HCT116 (cell line): ENCODE measurements at regions of chr3 and their contacts with region 1.

Region 1: GRCh38 chr3:111967651-111968274 is 11.1 kb upstream of the ABHD10 start:
- DNase-seq: peak; percentile 82
- ATAC-seq: peak; percentile 92
- H3K4me3 ChIP-seq: no peak overlapping the region
- H3K27ac ChIP-seq: peak overlapping the region; percentile 85
- H3K4me1 ChIP-seq: peaks cover 31 to 52% of the 10 kb centered on the region in 2 experiments
- H3K27me3 ChIP-seq: no peaks in the 10 kb centered on the region
- CTCF ChIP-seq: peak; percentile 94 to 98 (median 96)
- POLR2A ChIP-seq: no peak
- RAD21 ChIP-seq: peak; percentile 99

Region 2: DNA sequence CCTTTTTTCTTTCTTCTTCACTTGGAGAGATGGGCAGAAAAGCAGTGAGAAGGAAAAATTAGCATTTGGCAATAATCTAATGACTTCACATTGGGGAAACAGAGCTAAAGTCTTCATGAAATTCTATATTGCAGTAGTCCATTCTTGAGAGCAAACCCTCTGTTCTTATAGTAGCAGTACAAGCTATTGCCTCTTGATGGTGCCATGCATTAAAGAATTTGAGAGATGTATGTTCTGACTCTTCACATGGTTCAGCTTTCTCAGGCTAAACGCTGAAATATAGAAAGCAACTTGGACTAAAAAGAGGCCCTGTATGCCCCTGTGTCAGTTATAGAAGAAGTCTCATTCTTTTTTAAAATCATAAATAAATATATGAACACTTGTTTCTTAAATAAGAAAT is 72.7 kb before region 1 on chr3:
- CTCF ChIA-PET with region 1: interaction called, 35 read pairs
- POLR2A ChIA-PET with region 1: interaction called, 4 read pairs
- RAD21 ChIA-PET with region 1: interaction called, 14 to 17 read pairs
- intact Hi-C with region 1: loop called (anchors 1 kb)
- DNase-seq: peak; percentile 75
- ATAC-seq: peak; percentile 82
- H3K4me3 ChIP-seq: no peak overlapping the region
- H3K27ac ChIP-seq: peak overlapping the region; percentile 58
- H3K4me1 ChIP-seq: peaks cover 23 to 73% of the 10 kb centered on the region in 2 experiments; a peak in 3 of 4 replicates
- H3K27me3 ChIP-seq: no peaks in the 10 kb centered on the region
- CTCF ChIP-seq: peak in 2 of 3 experiments; percentile 64 to 81; a peak in 4 of 6 replicates
- POLR2A ChIP-seq: no peak
- RAD21 ChIP-seq: no peak

Region 3: GRCh38 chr3:111917300-111917699 is 50.5 kb before region 1 on chr3:
- CTCF ChIA-PET with region 1: interaction called, 10 read pairs
- POLR2A ChIA-PET with region 1: interaction called, 7 read pairs
- RAD21 ChIA-PET with region 1: interaction called in 1 of 2 experiments, 3 read pairs
- intact Hi-C with region 1: no loop called
- DNase-seq: peak; percentile 95
- ATAC-seq: peak; percentile 91
- H3K4me3 ChIP-seq: no peak overlapping the region
- H3K27ac ChIP-seq: peak overlapping the region; percentile 96
- H3K4me1 ChIP-seq: peaks cover 73 to 94% of the 10 kb centered on the region in 2 experiments
- H3K27me3 ChIP-seq: no peaks in the 10 kb centered on the region
- CTCF ChIP-seq: no peak
- POLR2A ChIP-seq: no peak
- RAD21 ChIP-seq: no peak

Region 4: DNA sequence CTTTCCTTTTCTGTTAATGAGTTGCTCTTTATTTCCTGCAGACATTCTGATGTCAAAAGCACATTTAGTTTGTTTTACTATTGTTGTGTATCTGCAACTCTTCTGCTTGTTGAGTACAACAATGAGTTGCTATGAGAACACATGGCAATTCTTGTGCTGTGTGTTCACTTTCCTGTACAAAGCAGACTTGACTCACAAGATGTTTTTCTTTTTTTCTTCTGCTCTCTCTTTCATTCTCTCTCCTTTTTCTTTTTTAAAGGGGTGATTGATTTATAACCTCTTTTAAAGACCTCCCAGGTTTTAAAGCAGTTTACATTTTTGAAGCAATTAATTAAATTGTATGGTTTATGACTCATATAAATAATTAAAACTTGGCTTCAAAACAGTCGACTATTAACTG is 20.5 kb before region 1 on chr3:
- CTCF ChIA-PET with region 1: interaction called, 10 read pairs
- POLR2A ChIA-PET with region 1: interaction called, 3 read pairs
- RAD21 ChIA-PET with region 1: no interaction called
- intact Hi-C with region 1: no loop called
- DNase-seq: no peak
- ATAC-seq: peak; percentile 52
- H3K4me3 ChIP-seq: no peak overlapping the region
- H3K27ac ChIP-seq: peak overlapping the region; percentile 75
- H3K4me1 ChIP-seq: peaks cover 26 to 44% of the 10 kb centered on the region in 2 experiments
- H3K27me3 ChIP-seq: no peaks in the 10 kb centered on the region
- CTCF ChIP-seq: no peak
- POLR2A ChIP-seq: no peak
- RAD21 ChIP-seq: no peak

Region 5: DNA sequence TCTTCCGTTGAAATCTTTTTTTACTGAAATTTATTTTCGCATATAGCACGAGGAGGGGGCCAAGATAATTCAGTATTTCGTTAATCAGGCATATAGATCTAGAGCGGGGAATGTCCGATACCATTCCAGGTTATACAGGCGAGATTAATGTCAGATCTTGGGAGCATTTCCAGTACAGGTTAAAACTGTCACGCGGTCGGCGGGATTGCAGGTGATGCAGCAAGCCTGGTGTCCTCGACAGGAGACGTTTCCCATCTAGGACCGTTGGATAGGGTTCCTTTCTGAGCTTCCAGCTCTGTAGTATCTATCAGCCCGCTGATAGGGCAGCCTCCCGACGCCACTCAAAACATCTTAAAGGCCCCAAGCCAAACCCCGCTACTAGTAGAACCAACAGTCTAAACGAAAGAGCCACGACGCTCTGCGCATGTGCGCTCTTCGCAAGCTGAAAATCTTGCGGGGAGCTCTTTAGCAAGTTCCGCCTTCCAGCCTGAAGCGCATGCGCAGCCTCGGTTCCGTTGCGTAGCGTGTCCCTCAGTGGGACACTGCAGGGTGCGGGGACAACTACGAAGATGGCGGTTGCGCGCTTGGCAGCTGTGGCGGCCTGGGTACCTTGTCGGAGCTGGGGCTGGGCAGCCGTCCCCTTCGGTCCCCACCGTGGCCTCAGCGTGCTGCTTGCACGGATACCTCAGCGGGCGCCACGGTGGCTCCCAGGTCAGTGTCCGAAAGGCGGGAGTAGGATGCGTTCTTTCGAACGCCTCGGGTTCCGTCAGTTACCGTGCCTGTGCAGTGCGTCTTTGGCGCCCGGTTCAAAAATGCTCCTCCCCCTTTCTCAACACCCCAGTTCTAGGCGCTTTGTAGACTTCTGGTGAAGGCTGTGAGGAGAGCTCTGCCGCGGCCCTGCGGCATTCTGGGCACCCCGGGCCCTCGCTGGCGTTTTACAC is 11.0 kb after region 1 on chr3 and contains the start of gene ABHD10:
- CTCF ChIA-PET with region 1: interaction called, 29 read pairs
- POLR2A ChIA-PET with region 1: interaction called, 24 read pairs
- RAD21 ChIA-PET with region 1: interaction called, 3 to 6 read pairs
- intact Hi-C with region 1: no loop called
- DNase-seq: peak; percentile 100
- ATAC-seq: peak; percentile 94
- H3K4me3 ChIP-seq: peak within 1 kb of the TSS; percentile 77 to 78
- H3K27ac ChIP-seq: peak within 1 kb of the TSS; percentile 90
- H3K4me1 ChIP-seq: peaks cover 25 to 33% of the 10 kb centered on the region in 2 experiments
- H3K27me3 ChIP-seq: no peaks in the 10 kb centered on the region
- CTCF ChIP-seq: no peak
- POLR2A ChIP-seq: peak; percentile 89
- RAD21 ChIP-seq: no peak
- total RNA-seq, gene ABHD10: 295 TPM

Region 6: GRCh38 chr3:112013058-112013783 is 45.5 kb after region 1 on chr3:
- CTCF ChIA-PET with region 1: interaction called, 40 read pairs
- POLR2A ChIA-PET with region 1: interaction called, 5 read pairs
- RAD21 ChIA-PET with region 1: interaction called, 4 to 6 read pairs
- intact Hi-C with region 1: loop called (anchors 1 kb)
- DNase-seq: peak; percentile 74
- ATAC-seq: peak; percentile 92
- H3K4me3 ChIP-seq: no peak overlapping the region
- H3K27ac ChIP-seq: peak overlapping the region; percentile 1; the same call in 1 of the 2 replicates
- H3K4me1 ChIP-seq: peaks cover 0 to 14% of the 10 kb centered on the region in 2 experiments; a peak in 2 of 4 replicates
- H3K27me3 ChIP-seq: no peaks in the 10 kb centered on the region
- CTCF ChIP-seq: peak; percentile 79 to 90 (median 89)
- POLR2A ChIP-seq: no peak
- RAD21 ChIP-seq: peak; percentile 93